ENCODE measurements at regions of chr2 and their contacts with region 1.

Region 1: DNA sequence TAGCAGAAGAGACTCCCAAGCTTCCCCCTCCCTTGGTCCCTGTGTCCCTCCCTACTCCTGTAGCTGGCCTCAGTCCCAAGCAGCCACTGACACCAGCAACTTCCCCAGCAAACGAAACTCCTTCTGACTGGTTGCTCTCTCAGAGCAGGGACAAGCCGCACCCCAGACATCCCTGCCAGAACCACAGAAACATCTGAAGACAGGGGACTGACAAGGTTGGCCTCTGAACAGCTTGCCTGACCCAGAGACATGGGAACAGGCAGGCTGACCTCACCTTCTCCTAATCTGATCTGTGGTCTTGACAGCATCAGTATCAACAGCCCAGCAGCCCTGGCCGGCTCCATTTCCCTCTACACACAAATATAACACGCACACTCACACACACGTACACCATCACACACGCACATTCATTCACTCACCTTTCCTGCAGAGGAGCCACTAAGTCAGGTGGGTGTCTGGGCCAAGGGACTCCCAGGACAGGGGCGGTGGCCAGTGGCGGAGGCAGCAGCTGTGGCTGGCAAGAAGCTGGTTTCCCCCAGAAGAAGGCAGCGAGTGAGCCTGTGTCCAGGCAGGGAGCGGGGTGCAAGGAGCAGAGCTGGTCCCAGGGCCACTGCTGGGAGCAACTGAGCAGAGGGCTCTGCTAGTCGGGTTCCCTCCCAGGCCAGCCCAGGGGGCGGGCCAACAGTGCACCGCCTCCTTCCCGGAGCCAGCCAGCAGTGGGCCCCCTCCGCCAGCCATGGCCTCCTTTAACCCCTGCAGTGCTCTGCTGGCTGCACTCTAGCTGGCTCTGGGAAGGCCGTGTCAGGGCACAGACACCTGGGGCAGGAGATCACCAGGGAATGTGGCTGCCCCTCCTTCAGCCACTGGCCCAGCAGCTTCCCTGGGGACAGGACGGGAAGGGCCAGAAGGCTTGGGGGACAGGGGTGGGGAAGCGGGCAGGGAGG is 59.1 kb downstream of the TNS1 start:
- DNase-seq: peak; percentile 58 to 97 (median 78)

Region 2: DNA sequence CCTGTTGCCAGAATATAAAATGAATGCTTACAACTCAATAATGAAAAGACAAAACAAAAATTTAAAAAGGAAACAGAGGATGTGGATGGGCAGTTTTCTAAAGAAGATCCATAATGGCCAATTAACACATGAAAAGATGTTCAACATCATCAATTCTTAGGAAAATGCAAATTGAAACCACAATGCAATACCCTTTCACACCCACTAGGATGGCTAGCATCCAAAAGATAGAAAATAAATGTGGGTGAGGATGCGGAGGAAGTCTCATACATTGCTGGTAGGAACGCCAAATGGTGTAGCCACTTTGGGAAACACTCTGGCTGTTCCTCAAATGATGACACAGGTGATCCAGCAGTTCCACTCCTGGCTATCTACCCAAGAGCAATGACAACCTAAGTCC is 71.4 kb before region 1 on chr2:
- intact Hi-C with region 1: no loop called
- DNase-seq: no peak

Region 3: GRCh38 chr2:217899231-217900009 is 44.3 kb before region 1 on chr2:
- intact Hi-C with region 1: loop called (anchors 5 kb)
- DNase-seq: peak in 1 of 10 donors; percentile 77